ENCODE measurements at regions of chr17 and their contacts with region 1.

Region 1: GRCh38 chr17:53150101-53150698 is 672.5 kb upstream of the KIF2B start:
- DNase-seq: peak; percentile 4
- ATAC-seq: peak; percentile 44; the same call in 1 of the 3 replicates
- H3K4me3 ChIP-seq: no peak overlapping the region
- H3K27ac ChIP-seq: no peak overlapping the region
- H3K4me1 ChIP-seq: no peaks in the 10 kb centered on the region
- H3K27me3 ChIP-seq: no peaks in the 10 kb centered on the region
- CTCF ChIP-seq: no peak
- EP300 ChIP-seq: no peak
- POLR2A ChIP-seq: no peak
- RAD21 ChIP-seq: no peak

Region 2: DNA sequence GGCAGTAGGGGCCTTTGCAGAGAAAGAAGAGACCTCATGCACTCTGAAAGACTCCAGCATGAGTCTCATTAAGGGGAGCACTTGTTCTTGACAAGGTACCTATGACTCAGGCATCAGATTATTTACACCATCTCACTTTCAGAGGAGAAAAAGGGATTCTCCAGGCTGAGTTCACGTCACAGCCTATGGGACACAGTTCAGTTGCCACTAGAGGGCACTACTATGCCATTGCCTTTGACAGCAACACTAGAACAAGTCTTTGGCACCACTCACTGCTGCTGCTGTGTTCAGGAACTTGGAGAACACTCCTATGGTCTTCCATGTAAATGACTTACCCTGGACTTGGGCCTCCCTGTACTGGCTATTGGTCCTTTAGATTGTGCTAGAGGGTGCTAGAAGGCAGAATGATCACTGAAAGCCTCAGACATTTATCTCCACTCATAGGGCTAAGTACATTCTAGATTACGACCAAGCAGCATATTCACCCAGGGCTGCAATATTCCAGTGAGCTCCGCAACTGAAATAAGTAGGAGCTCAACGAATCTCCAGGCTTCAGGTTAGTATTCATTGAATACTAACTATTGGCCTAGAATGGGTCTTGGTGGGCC is 766.6 kb before region 1 on chr17:
- CTCF ChIA-PET with region 1: no interaction called
- POLR2A ChIA-PET with region 1: no interaction called
- in situ Hi-C with region 1: no loop called
- intact Hi-C with region 1: loop called (anchors 1 kb)
- DNase-seq: peak; percentile 71
- ATAC-seq: peak; percentile 98
- H3K4me3 ChIP-seq: no peak overlapping the region
- H3K27ac ChIP-seq: no peak overlapping the region
- H3K4me1 ChIP-seq: peaks cover 16% of the 10 kb centered on the region
- H3K27me3 ChIP-seq: no peaks in the 10 kb centered on the region
- CTCF ChIP-seq: peak; percentile 84
- EP300 ChIP-seq: no peak
- POLR2A ChIP-seq: no peak
- RAD21 ChIP-seq: peak; percentile 50